Cardiac septum (tissue), 1 donor: ENCODE measurements at regions of chr19 and their contacts with region 1.

Region 1: DNA sequence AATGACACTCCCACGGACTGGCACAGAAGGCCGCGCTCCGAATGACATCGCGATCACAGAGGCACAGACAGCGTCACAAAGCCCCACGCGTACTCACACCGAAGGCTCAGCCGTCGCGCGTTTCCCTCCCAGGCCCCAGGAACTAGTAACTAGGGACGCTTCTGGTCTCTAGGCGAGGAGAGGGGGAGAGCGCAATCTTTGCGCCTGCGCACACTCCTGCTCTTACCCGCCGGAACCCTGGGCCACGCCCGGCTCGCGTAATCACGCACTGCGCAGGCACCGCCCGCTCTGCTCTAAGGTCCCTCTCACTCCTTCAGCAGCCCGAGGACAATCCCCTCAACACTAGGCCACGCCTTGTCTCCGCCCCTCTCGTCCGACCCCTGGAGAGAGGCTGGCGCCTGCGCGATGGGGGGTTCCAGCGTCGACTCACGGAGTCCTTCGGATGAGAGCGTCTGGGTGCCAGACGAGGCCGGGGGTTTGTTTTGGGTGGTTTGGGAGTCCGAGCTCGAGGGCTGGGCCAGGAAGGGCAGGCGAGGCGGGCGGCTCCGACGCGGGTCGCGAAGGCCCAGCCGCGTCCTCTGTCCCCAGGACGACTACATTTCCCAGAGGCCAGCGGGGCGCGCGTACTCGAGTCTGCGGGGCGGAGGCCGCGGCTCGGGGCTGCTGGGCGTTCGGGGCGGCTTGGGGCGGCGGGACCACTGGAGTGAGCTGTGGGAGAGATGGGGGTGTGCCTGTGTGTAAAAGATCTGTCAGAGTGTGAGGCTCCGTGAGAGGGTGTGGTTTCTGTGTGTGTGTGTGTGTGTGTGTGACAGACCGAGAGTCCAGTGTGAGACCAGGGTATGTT is at the start of gene ZNF471:
- DNase-seq: peak; percentile 98
- total RNA-seq, gene ZNF471: 7.2 TPM

Region 2: DNA sequence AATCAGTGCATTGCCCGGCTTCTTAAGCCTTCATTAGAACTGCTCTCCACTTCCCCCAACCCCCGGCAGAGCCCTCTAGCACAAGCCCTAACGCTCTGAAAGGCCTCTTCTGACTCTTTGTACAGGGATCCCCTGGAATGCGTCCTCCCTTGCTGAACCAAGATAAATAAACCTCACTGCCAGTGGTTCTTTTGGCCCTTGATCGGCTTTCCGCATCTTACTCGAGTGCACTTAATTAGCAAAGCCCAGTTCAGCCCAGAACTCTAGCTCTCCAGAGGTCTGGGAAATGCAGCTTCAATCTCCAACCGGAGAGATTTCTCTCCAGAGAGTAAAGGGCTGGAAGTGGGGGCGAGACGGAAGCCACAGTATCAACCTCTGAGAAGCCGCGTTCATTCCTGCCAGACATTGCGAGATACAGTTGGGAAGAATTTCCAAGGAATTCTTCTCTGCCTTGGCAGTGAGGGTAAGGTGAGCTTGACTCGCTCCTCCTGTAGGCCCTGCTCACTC is 375.3 kb before region 1 on chr19:
- intact Hi-C with region 1: no loop called
- DNase-seq: no peak

Region 3: DNA sequence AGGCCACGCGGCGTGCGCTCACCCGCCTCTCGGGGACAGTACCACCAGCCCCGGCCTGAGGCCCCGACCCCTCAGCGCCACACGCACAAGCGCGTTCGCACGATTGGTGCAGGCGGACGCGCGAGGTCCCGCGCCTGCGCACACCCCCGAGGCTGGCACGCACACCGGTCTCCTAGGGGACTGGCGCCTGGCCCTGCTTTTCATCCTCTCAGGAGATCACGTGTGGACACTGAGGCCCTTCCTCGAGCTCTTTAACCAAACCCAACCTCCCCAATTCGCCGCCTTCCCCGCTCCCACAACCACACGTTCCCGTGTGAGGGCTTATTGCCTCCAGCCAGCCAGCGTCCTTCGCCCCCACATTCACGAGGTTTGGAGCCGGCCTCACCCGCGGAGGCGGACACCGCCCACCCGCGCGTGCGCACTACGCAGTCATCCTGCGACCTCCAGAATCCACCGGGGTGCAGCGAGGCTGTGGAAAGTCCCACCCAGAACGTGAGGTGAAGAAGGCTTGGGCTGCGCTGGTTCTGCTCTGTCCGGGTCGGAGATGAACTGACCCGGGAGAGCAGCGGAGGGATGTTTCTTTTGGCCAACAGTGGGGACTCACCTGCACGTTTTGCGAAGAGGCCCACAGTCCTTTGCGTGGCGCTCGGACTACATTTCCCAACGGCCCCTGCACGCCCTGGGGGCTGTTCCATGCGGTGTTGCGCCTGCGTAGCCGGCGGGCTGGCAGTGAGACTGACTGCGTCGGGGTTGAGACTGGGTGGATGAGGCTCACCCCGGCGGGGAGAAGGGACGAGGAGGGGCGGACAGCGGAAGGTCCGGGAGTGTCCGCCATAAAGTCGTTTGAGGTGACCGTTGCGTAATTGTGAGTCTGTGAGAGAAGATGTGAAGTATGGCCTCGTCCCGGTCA is 30.0 kb before region 1 on chr19:
- intact Hi-C with region 1: loop called (anchors 1 kb)
- DNase-seq: peak; percentile 94

Region 4: DNA sequence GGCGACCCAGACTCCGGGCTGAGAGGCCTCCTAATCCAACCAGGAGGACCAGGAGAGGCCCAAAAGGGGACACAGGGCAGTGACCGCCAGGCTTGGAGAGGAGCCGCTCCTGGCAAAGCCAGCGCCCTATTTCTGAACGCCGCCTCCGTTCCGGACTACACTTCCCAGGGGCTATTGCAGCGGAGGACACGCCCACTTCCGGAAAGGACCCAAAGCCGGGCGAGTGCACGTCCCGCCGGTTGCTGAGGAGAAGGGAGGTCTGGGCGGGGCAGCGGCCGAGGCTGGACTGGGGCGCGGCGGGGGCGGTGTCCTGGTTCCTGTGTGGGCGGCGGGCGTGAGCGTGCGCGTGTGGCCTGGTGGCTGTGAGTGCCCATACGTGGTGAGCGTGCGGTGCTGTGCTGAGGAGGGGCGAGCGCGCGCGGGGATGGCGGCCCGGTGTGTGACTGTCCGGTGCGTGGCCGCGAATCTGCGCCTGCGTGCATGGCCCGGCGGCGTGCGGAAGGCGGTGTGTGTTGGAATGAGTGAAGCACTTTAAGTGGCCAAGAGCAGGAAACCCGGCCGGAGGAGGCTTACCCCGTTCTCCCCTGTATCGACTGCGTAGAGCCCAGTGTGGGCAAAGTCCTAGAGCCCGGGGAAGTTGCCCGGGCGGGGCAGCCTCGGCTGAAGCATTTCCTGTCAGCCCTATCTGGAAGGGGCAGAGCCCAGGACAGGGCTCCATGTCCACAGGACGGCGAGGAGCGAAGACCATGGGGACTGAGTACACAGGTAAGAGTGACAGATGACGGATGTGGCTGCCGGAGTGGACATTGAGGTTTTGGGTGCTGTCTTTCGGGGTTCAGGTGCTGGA is 59.8 kb after region 1 on chr19 and contains the start of gene ZNF470:
- intact Hi-C with region 1: loop called (anchors 2 kb)
- DNase-seq: peak; percentile 96
- total RNA-seq, gene ZNF470: 6.6 TPM